ENCODE measurements at regions of chr6 and their contacts with region 1.

Region 1: GRCh38 chr6:32971581-32972352 is 3.4 kb downstream of the BRD2 start:
- DNase-seq: peak; percentile 98 to 100 (median 100)
- ATAC-seq: peak; percentile 50 to 68
- H3K4me3 Mint-ChIP-seq: peak overlapping the region; percentile 78 to 99 (median 99)
- H3K27ac Mint-ChIP-seq: peak overlapping the region; percentile 91 to 100 (median 100)
- H3K4me1 Mint-ChIP-seq: peaks cover 30 to 57% (median 44%) of the 10 kb centered on the region in 4 donors
- H3K27me3 Mint-ChIP-seq: peaks cover 0 to 2% (median 0%) of the 10 kb centered on the region in 5 donors

Region 2: DNA sequence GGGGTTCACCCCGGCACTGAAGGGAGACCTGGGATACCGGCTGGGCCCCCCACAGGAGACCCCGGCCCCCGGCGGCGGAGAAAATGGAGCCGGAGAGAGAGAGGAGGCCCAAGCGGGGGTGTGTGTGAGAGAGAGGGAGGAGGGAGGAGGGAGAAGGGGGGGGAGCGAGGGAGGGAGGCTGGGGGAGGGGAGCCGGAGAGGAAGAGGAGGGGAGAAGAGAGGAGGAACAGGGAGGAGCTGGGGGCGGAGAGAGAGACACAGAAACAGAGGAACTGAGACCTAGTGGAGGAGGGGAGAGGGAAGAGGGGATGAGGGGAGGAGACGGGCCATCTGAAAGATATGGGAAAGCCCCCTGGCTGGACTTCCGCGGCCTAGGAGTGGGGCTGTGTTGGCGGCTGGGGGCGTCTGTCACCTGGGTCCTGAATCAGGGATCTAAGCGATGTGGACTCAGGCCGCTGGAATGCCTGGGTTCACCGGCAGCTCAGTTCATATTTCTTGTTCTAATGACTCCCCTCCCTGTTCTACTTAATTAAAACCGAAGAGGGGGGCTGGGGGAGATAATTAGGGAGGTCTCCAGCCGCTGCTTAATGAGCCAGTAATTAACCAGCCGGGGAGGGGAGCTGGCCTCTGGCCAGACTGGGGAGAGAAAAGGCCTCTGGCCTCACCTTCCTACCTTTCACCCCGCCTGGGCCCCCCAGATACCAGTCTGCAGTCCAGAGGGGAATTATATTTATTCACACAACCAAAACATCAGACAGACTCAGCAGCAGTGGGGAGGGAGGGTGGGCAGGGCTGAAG is 781.5 kb before region 1 on chr6 and contains the start of gene PBX2:
- POLR2A ChIA-PET with region 1: interaction called, 17 read pairs
- DNase-seq: peak; percentile 52 to 92 (median 68)
- ATAC-seq: peak; percentile 40 to 58
- H3K4me3 Mint-ChIP-seq: peak within 1 kb of the TSS; percentile 94 to 100 (median 98)
- H3K27ac Mint-ChIP-seq: peak within 1 kb of the TSS; percentile 91 to 100 (median 98)
- H3K4me1 Mint-ChIP-seq: peaks cover 49 to 79% (median 65%) of the 10 kb centered on the region in 4 donors
- H3K27me3 Mint-ChIP-seq: no peaks in the 10 kb centered on the region
- polyA plus RNA-seq, gene PBX2: 1.6 to 2.2 (median 2.0) TPM

Region 3: DNA sequence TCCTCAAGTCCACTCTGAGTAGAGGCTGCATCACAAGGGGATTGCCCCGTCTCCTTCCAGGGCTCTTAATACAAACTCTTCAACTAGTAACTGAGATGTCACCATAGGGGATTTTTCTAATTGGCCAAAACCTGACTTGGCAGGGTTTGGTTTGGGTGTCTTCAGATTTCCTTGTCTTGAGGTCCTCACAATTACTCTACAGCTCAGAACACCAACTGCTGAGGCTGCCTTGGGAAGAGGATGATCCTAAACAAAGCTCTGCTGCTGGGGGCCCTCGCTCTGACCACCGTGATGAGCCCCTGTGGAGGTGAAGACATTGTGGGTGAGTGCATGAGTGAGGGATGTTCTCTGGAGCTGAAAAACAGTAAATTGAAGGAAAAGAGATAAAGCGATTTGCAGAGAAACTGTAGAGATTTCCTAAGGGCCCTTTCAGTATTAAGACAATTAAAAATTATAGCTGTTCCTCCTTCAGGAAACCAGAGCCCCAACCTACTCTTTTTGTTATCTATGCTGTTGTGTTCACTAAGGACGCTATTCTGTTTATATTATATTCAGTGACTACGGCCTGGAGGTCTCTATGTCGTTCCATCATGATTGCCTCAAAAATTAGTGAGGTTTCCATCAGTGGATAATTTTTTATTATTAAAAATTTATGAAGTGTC is 334.4 kb before region 1 on chr6 and contains the start of gene HLA-DQA1:
- POLR2A ChIA-PET with region 1: no interaction called
- DNase-seq: peak in 1 of 10 donors; percentile 8
- ATAC-seq: peak in 1 of 2 donors; percentile 41
- H3K4me3 Mint-ChIP-seq: peak within 1 kb of the TSS in 4 of 10 donors; percentile 50 to 90 (median 69)
- H3K27ac Mint-ChIP-seq: peak within 1 kb of the TSS in 6 of 10 donors; percentile 8 to 87 (median 78)
- H3K4me1 Mint-ChIP-seq: peaks cover 0 to 69% (median 18%) of the 10 kb centered on the region in 4 donors
- H3K27me3 Mint-ChIP-seq: peaks cover 0 to 17% (median 2%) of the 10 kb centered on the region in 5 donors
- polyA plus RNA-seq, gene HLA-DQA1: 1.6 to 11.0 TPM in 2 of 3 donors, not detected in the other

Region 4: DNA sequence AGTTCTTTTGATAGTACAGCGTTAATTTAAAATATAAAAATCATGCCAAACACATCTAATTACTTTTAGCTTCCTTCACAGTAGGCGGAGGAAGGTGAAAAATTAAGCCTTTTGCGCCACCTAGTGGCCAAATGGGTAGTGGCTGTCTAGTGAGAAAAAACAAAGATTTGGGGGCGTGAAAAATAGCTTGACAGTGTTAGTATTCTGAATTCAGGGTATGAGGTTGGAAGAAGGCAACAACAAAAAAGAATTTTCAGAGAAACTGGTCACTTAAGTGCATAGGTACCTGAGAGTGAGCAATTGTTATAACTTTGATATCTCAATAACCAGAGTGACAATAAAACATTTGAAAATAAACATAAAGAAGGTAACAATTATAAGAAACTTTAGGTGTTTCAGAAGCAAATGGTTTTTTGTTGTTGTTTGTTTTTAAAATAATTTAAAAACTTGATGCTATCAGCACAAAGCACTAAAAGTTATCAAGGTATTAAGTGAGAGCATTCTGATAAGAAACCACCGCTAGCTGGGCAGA is 103.4 kb before region 1 on chr6:
- POLR2A ChIA-PET with region 1: interaction called, 18 read pairs
- DNase-seq: peak; percentile 75 to 92 (median 84)
- ATAC-seq: peak; percentile 72 to 78
- H3K4me3 Mint-ChIP-seq: peak overlapping the region in 2 of 10 donors; percentile 2
- H3K27ac Mint-ChIP-seq: peak overlapping the region in 5 of 10 donors; percentile 9 to 93 (median 87)
- H3K4me1 Mint-ChIP-seq: peaks cover 9 to 37% (median 31%) of the 10 kb centered on the region in 4 donors
- H3K27me3 Mint-ChIP-seq: peaks cover 0 to 1% (median 0%) of the 10 kb centered on the region in 5 donors

Region 5: GRCh38 chr6:32952817-32953739 is 18.7 kb before region 1 on chr6 and contains the start of gene HLA-DMA:
- POLR2A ChIA-PET with region 1: interaction called, 344 read pairs
- DNase-seq: peak; percentile 37 to 89 (median 78)
- ATAC-seq: peak; percentile 98
- H3K4me3 Mint-ChIP-seq: peak within 1 kb of the TSS; percentile 76 to 88 (median 82)
- H3K27ac Mint-ChIP-seq: peak within 1 kb of the TSS; percentile 85 to 94 (median 90)
- H3K4me1 Mint-ChIP-seq: peaks cover 37 to 76% (median 60%) of the 10 kb centered on the region in 4 donors
- H3K27me3 Mint-ChIP-seq: no peaks in the 10 kb centered on the region
- polyA plus RNA-seq, gene HLA-DMA: 23.7 to 37.4 (median 26.9) TPM

Region 6: DNA sequence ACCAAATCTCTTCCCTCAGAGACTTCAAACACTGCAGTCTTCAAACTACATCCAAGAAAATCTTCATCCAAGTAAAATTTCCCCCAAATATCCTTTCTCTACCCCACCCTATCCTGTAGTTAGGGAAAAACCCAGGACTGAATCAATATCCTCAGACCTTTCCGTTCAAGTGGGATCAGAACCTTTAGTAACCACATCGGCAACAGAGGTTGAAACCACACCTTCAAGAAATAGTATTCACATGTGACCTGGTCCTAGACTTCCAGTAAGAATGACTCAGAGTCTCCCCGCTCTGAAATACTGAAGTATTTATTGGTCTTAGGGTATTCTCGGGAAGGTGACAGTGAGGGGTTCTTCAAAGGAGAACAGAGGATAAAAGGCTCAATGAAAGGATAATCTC is 93.0 kb after region 1 on chr6:
- POLR2A ChIA-PET with region 1: no interaction called
- DNase-seq: no peak
- ATAC-seq: no peak
- H3K4me3 Mint-ChIP-seq: no peak overlapping the region
- H3K27ac Mint-ChIP-seq: no peak overlapping the region
- H3K4me1 Mint-ChIP-seq: peaks cover 0 to 19% (median 3%) of the 10 kb centered on the region in 4 donors
- H3K27me3 Mint-ChIP-seq: peaks cover 0 to 13% (median 0%) of the 10 kb centered on the region in 5 donors

Region 7: DNA sequence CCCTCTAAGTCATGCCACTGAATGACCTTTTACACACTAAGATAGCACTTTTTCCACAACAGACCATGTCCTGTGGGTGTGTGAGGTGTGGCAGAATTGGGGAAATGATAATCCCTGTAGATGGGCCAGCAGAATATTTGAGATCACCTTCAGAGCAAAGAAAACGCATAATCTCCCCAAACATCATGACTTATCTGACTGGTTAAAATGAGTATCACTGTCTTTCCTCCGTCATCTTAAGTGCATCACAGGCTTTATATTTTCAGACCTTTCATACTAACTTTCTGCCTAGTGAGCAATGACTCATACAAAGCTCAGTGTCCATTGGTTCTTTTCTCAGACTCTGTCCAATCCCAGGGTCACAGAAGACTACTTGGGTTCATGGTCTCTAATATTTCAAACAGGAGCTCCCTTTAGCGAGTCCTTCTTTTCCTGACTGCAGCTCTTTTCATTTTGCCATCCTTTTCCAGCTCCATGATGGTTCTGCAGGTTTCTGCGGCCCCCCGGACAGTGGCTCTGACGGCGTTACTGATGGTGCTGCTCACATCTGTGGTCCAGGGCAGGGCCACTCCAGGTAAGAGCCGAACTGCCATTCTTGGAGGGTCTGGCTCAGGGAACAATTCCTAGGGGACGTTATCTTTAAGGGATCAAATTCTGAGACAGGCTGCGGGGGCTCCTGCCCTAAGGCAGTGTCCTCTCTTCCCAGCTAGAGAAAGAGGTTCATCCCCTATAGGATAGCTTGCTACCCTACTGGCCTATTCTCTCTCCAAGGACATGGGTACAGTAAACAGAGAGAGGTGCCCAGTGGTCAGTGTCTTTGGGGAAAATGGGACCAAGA is 104.0 kb after region 1 on chr6 and contains the start of gene HLA-DPB1:
- POLR2A ChIA-PET with region 1: interaction called, 14 read pairs
- DNase-seq: peak in 7 of 10 donors; percentile 26 to 82 (median 68)
- ATAC-seq: peak; percentile 97 to 98
- H3K4me3 Mint-ChIP-seq: peak within 1 kb of the TSS; percentile 84 to 96 (median 89)
- H3K27ac Mint-ChIP-seq: peak within 1 kb of the TSS; percentile 71 to 97 (median 92)
- H3K4me1 Mint-ChIP-seq: peaks cover 32 to 85% (median 71%) of the 10 kb centered on the region in 4 donors
- H3K27me3 Mint-ChIP-seq: peaks cover 0 to 8% (median 0%) of the 10 kb centered on the region in 5 donors
- polyA plus RNA-seq, gene HLA-DPB1: 62.2 to 228 (median 186) TPM

Region 8: GRCh38 chr6:33271458-33272274 is 299.9 kb after region 1 on chr6 and contains the starts of genes RPS18 and VPS52:
- POLR2A ChIA-PET with region 1: interaction called, 13 read pairs
- DNase-seq: peak; percentile 78 to 100 (median 94)
- ATAC-seq: peak; percentile 86 to 88
- H3K4me3 Mint-ChIP-seq: peak within 1 kb of the TSS; percentile 92 to 99 (median 96)
- H3K27ac Mint-ChIP-seq: peak within 1 kb of the TSS; percentile 99 to 100 (median 99)
- H3K4me1 Mint-ChIP-seq: peaks cover 34 to 71% (median 70%) of the 10 kb centered on the region in 4 donors
- H3K27me3 Mint-ChIP-seq: no peaks in the 10 kb centered on the region
- polyA plus RNA-seq, gene RPS18: 9,896 to 11,320 (median 11,293) TPM
- polyA plus RNA-seq, gene VPS52: 9.3 to 19.3 (median 15.2) TPM

Region 9: GRCh38 chr6:33317669-33318425 is 346.1 kb after region 1 on chr6 and contains the start of gene ZBTB22:
- POLR2A ChIA-PET with region 1: interaction called, 11 read pairs
- DNase-seq: peak; percentile 89 to 98 (median 94)
- ATAC-seq: peak; percentile 59 to 62
- H3K4me3 Mint-ChIP-seq: peak within 1 kb of the TSS in 9 of 10 donors; percentile 96 to 100 (median 99)
- H3K27ac Mint-ChIP-seq: peak within 1 kb of the TSS; percentile 95 to 100 (median 98)
- H3K4me1 Mint-ChIP-seq: peaks cover 36 to 87% (median 79%) of the 10 kb centered on the region in 4 donors
- H3K27me3 Mint-ChIP-seq: no peaks in the 10 kb centered on the region
- polyA plus RNA-seq, gene ZBTB22: 10.4 to 13.4 (median 10.7) TPM

Measured in naive thymus-derived CD8-positive, alpha-beta T cell (primary cell).